ENCODE measurements at regions of chr10 and their contacts with region 1.

Region 1: DNA sequence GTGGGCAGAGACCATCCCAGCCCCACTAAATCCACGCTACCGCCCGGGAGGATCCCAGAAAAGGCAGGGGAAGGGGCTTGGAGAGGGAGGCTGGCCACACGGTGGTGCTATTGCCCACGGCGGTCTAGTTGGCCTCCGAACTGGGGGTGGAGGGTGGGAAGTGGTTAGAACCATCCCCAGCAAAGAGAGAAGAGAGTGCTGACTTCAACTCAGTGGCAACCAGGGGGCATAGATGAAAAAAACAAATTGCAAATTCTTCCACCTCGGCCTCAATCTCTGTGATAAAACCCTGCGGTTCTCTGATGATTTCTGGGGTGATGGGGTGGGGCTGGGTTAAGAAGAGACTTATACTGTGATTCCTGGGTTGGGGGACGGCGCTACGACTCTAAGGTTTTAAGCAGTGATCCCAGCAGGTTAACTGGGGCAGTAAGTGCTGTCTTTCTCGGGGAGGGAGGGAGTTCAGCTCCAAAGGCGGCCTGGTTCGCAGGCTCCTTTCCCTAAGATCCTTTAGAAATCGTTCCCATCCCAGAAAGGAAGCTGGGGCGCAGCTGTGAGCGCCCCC is 154.5 kb upstream of the LYZL2 start:
- DNase-seq: peak; percentile 43 to 77
- ATAC-seq: peak; percentile 66 to 90; a peak in 5 of 6 replicates
- H3K4me3 ChIP-seq: no peak overlapping the region
- H3K27ac ChIP-seq: no peak overlapping the region
- H3K4me1 ChIP-seq: no peaks in the 10 kb centered on the region
- CTCF ChIP-seq: peak; percentile 77
- EP300 ChIP-seq: no peak
- POLR2A ChIP-seq: no peak
- RAD21 ChIP-seq: peak; percentile 86

Region 2: GRCh38 chr10:30769361-30769760 is 14.7 kb before region 1 on chr10:
- CTCF ChIA-PET with region 1: interaction called, 42 read pairs
- POLR2A ChIA-PET with region 1: no interaction called
- DNase-seq: no peak
- ATAC-seq: no peak
- H3K4me3 ChIP-seq: no peak overlapping the region
- H3K27ac ChIP-seq: no peak overlapping the region
- H3K4me1 ChIP-seq: no peaks in the 10 kb centered on the region
- CTCF ChIP-seq: no peak
- EP300 ChIP-seq: no peak
- POLR2A ChIP-seq: no peak
- RAD21 ChIP-seq: no peak

Region 3: GRCh38 chr10:30840406-30841050 is 56.5 kb after region 1 on chr10:
- CTCF ChIA-PET with region 1: no interaction called
- POLR2A ChIA-PET with region 1: no interaction called
- DNase-seq: no peak
- ATAC-seq: no peak
- H3K4me3 ChIP-seq: no peak overlapping the region
- H3K27ac ChIP-seq: no peak overlapping the region
- H3K4me1 ChIP-seq: no peaks in the 10 kb centered on the region
- CTCF ChIP-seq: no peak
- EP300 ChIP-seq: no peak
- POLR2A ChIP-seq: no peak
- RAD21 ChIP-seq: no peak